Calu3 (cell line): ENCODE measurements at regions of chr2 and their contacts with region 1.

Region 1: DNA sequence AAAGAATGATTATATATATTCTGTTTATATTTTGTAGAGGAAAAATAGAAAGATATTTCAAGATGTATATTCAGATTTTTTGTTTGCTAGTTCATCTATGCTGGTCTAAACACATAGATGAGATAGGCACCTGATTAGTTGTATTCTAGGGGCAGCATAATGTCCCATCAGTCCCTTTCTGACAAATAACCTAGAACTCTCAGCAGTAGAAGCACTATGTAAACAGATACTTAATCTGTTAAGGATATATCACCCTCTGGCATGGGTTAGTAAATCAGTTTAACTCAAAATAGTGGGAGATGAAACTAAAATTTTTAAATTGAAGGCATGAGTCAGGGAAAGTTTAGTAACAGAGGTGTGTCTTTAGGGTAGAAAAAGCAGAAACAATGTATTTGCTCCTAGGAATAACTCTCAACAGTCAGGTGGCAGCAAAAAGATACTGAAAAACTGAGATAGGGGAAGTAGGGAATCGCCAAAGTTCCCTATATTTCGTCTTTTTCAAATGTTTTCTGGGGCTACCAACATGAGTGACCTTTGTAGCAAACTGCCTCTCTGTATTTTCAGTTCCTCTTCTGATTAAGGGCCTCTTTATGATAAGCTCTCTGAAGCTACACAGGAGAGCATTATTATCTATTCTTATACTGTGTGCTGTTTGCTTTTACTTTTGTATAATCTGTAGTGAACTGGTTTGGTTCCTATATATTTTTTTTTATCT is 5.7 kb downstream of the PPP1R1C start:
- DNase-seq: no peak
- H3K4me3 Mint-ChIP-seq: no peak overlapping the region
- H3K27ac Mint-ChIP-seq: no peak overlapping the region
- H3K4me1 Mint-ChIP-seq: no peaks in the 10 kb centered on the region
- H3K27me3 Mint-ChIP-seq: no peaks in the 10 kb centered on the region
- CTCF ChIP-seq: no peak

Region 2: DNA sequence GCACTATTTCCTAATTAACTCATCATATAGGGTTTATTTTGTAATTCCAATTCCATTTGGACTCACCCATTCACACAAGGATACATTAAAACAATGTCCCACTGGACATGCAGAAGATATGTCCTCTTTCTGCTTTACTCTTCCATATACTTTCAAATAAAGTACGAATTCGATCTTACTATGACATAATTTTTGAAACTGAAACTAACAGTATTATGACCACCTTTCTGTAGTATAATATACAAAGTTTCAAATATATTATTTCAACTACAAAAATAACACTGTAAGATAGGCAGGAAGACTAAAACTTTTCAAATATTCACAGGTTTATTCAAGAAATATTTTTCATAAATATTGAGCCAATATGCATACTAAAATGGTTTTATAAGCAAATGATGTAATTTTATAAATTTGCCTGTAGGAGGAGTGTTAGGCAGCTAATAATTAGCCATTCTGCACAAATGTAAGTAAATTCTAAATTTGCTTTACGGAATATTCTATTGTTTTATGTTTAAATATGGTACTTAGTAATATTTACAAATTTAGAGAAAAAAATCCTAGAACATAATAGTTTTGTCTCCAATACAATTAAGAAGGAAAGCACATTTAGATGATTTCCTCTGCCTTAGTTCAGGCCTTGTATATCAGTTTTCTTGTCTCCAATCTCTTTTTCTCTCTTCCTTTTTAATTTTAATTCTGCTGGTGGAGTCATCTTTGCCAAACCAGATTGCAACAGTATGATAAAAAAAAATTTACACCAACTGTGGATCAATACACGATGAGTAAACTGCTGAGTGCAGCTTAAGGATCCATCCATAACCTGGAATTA is 420.3 kb before region 1 on chr2:
- CTCF ChIA-PET with region 1: no interaction called
- intact Hi-C with region 1: no loop called
- DNase-seq: no peak
- H3K4me3 Mint-ChIP-seq: no peak overlapping the region
- H3K27ac Mint-ChIP-seq: no peak overlapping the region
- H3K4me1 Mint-ChIP-seq: no peaks in the 10 kb centered on the region
- H3K27me3 Mint-ChIP-seq: no peaks in the 10 kb centered on the region
- CTCF ChIP-seq: no peak

Region 3: GRCh38 chr2:181977661-181978350 is 13.5 kb before region 1 on chr2:
- CTCF ChIA-PET with region 1: no interaction called
- intact Hi-C with region 1: loop called (anchors 1 kb)
- DNase-seq: no peak
- H3K4me3 Mint-ChIP-seq: no peak overlapping the region
- H3K27ac Mint-ChIP-seq: no peak overlapping the region
- H3K4me1 Mint-ChIP-seq: no peaks in the 10 kb centered on the region
- H3K27me3 Mint-ChIP-seq: no peaks in the 10 kb centered on the region
- CTCF ChIP-seq: no peak

Region 4: DNA sequence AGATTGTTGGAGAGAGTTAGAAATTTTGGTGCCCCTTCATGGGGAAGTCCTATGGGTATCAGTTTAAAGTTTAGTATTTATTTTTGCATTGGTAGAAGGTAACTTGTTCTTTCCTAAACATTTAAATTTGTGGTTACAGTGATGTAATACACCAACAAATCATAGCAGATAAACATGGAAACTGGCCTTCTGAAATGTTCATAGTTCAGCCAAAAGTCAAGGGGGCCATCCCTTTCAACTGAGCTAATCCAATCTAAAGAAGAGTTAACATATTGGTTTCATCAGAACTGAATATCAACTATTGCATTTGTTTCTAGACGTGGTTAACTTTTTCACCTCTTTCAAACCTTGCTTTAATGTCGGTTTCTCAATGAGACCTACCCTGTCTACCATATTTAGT is 40.6 kb after region 1 on chr2:
- CTCF ChIA-PET with region 1: no interaction called
- intact Hi-C with region 1: no loop called
- DNase-seq: no peak
- H3K4me3 Mint-ChIP-seq: no peak overlapping the region
- H3K27ac Mint-ChIP-seq: no peak overlapping the region
- H3K4me1 Mint-ChIP-seq: no peaks in the 10 kb centered on the region
- H3K27me3 Mint-ChIP-seq: no peaks in the 10 kb centered on the region
- CTCF ChIP-seq: no peak